CD14-positive monocyte (primary cell): ENCODE measurements at regions of chr12 and their contacts with region 1.

Region 1: DNA sequence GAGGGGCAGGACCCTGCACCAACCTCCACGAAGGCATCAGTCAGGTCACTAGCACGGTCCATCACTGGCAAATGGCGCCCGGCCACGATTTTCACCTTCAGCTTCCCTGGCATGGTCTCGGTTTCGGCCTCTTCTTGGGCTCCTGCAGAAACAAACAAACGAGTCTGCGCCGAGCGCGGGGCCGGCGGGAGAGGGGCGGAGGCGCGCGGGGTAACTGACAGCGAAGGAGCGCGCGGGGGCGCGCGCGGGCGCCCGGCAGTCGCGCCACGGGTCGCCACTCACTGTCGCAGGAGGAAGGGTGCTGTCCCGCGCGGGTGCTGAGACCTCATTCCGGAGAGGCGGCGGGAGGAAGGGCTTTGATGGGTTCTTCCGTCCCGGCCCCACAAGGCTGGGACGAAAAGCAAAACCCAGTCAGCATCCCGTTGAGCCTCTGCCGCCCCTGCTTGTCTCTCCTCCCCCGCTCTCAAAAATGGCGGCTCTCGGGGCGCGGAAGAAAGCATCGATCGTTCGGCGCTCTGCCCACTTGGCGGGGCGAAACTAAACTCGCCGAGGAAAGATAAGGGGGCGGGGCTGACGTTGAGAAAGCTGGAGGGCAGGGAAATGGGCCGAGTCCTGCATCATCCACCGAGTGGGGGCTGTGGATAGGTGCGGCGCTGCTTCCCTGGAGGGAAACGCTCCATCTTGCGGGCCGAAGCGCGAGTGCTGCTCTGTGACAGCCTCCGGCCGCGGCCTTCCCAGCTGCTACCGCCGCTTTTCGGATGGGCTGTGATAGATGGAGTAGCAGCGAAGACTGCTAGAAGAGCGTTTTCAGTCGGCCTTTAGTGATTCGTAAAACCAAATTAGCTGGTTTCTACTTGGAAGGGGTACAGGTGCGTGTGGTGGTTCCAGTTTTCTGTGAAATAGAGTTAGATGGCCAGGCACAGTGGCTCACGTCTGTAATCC is at the start of gene C2CD5:
- DNase-seq: peak; percentile 91 to 97 (median 95)
- H3K4me3 ChIP-seq: peak within 1 kb of the TSS; percentile 88 to 96 (median 91)
- H3K4me3 Mint-ChIP-seq: peak within 1 kb of the TSS; percentile 91 to 96
- H3K27ac ChIP-seq: peak within 1 kb of the TSS; percentile 90 to 92
- H3K27ac Mint-ChIP-seq: peak within 1 kb of the TSS; percentile 89 to 97 (median 97)
- H3K4me1 ChIP-seq: peaks cover 55 to 58% of the 10 kb centered on the region in 2 donors
- H3K4me1 Mint-ChIP-seq: peaks cover 52% of the 10 kb centered on the region
- H3K27me3 ChIP-seq: no peaks in the 10 kb centered on the region
- H3K27me3 Mint-ChIP-seq: peaks cover 0 to 4% (median 0%) of the 10 kb centered on the region in 3 donors
- CTCF ChIP-seq: peak; percentile 37
- polyA plus RNA-seq, gene C2CD5: 13.0 to 22.8 (median 13.6) TPM

Region 2: DNA sequence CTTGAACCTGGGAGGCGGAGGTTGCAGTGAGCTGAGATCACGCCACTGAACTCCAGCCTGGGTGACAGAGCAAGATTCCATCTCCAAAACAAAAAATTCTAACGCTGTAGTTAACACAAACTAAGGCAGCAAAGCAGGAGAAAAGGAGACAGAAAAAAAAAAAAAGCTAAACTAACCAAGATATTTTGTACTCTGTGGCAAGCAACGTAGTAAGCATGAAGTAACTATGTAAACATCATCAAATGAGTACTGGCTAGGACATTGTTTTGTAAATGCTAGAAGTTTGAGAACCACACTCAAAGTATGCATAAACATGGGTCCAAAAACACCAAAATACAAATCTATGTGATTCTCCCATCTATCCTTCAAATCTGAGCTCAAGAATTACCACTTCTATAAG is 44.2 kb before region 1 on chr12:
- intact Hi-C with region 1: no loop called
- DNase-seq: no peak
- H3K4me3 ChIP-seq: no peak overlapping the region
- H3K4me3 Mint-ChIP-seq: no peak overlapping the region
- H3K27ac ChIP-seq: no peak overlapping the region
- H3K27ac Mint-ChIP-seq: no peak overlapping the region
- H3K4me1 ChIP-seq: no peaks in the 10 kb centered on the region
- H3K4me1 Mint-ChIP-seq: no peaks in the 10 kb centered on the region
- H3K27me3 ChIP-seq: no peaks in the 10 kb centered on the region
- H3K27me3 Mint-ChIP-seq: no peaks in the 10 kb centered on the region
- CTCF ChIP-seq: no peak

Region 3: DNA sequence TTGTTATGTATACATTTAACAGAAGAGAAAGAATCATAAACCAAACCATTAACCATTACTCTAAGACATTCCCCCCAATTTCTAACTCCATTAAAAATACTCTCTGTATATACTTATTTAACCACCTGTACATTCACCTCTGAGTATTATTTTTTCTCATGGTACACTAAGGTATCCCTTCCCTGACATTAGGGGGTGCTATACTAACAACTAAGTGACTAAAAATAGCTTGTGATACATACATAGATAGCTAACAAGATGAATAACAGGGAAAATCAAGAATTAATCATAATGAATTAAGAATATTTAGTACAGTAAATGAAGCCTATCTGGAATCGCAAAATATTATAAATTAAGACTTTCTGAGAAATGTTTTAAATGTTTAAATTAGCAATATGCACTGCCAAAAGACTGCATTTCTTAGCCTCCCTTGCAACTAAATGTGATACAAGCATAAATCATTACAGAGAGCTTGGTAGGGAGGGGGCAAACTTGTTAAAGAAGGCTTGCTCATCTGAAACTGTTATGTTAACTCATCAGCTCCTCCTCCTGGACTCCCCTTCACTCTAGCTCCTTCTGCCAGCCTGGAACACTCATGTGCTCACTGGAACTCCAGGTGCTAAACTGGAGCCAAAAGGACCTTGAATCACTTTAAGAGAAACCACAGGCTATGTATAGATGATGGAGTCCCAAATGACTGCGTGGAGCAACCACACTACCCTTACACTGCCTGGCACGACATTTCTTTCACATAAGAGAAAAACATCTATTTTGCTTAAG is 14.8 kb before region 1 on chr12:
- intact Hi-C with region 1: loop called in 1 of 2 experiments (anchors 2 kb)
- DNase-seq: peak; percentile 23 to 53 (median 51)
- H3K4me3 ChIP-seq: no peak overlapping the region
- H3K4me3 Mint-ChIP-seq: no peak overlapping the region
- H3K27ac ChIP-seq: peak overlapping the region in 1 of 2 donors; percentile 49
- H3K27ac Mint-ChIP-seq: peak overlapping the region in 4 of 7 donors; percentile 45 to 79 (median 67)
- H3K4me1 ChIP-seq: peaks cover 0 to 6% of the 10 kb centered on the region in 2 donors
- H3K4me1 Mint-ChIP-seq: peaks cover 7% of the 10 kb centered on the region
- H3K27me3 ChIP-seq: no peaks in the 10 kb centered on the region
- H3K27me3 Mint-ChIP-seq: no peaks in the 10 kb centered on the region
- CTCF ChIP-seq: peak; percentile 74

Region 4: GRCh38 chr12:22624870-22625761 is 80.8 kb after region 1 on chr12 and contains the start of gene ETNK1:
- intact Hi-C with region 1: loop called (anchors 5 kb)
- DNase-seq: peak; percentile 83 to 87 (median 86)
- H3K4me3 ChIP-seq: peak within 1 kb of the TSS; percentile 82 to 89 (median 87)
- H3K4me3 Mint-ChIP-seq: peak within 1 kb of the TSS; percentile 94 to 96
- H3K27ac ChIP-seq: peak within 1 kb of the TSS; percentile 79 to 97
- H3K27ac Mint-ChIP-seq: peak within 1 kb of the TSS; percentile 96 to 99 (median 97)
- H3K4me1 ChIP-seq: peaks cover 14 to 41% of the 10 kb centered on the region in 2 donors
- H3K4me1 Mint-ChIP-seq: peaks cover 37% of the 10 kb centered on the region
- H3K27me3 ChIP-seq: no peaks in the 10 kb centered on the region
- H3K27me3 Mint-ChIP-seq: peaks cover 0 to 6% (median 2%) of the 10 kb centered on the region in 3 donors
- CTCF ChIP-seq: no peak
- polyA plus RNA-seq, gene ETNK1: 13.7 to 17.3 (median 16.5) TPM

Region 5: GRCh38 chr12:22755629-22756028 is 211.3 kb after region 1 on chr12:
- intact Hi-C with region 1: no loop called
- DNase-seq: peak in 2 of 3 donors; percentile 7 to 8
- H3K4me3 ChIP-seq: no peak overlapping the region
- H3K4me3 Mint-ChIP-seq: no peak overlapping the region
- H3K27ac ChIP-seq: peak overlapping the region in 1 of 2 donors; percentile 65
- H3K27ac Mint-ChIP-seq: peak overlapping the region in 5 of 7 donors; percentile 51 to 83 (median 65)
- H3K4me1 ChIP-seq: peaks cover 0 to 11% of the 10 kb centered on the region in 2 donors
- H3K4me1 Mint-ChIP-seq: peaks cover 7% of the 10 kb centered on the region
- H3K27me3 ChIP-seq: no peaks in the 10 kb centered on the region
- H3K27me3 Mint-ChIP-seq: peaks cover 0 to 3% (median 0%) of the 10 kb centered on the region in 3 donors
- CTCF ChIP-seq: no peak